CD8-positive, alpha-beta T cell (primary cell): ENCODE measurements at regions of chr11 and their contacts with region 1.

Region 1: DNA sequence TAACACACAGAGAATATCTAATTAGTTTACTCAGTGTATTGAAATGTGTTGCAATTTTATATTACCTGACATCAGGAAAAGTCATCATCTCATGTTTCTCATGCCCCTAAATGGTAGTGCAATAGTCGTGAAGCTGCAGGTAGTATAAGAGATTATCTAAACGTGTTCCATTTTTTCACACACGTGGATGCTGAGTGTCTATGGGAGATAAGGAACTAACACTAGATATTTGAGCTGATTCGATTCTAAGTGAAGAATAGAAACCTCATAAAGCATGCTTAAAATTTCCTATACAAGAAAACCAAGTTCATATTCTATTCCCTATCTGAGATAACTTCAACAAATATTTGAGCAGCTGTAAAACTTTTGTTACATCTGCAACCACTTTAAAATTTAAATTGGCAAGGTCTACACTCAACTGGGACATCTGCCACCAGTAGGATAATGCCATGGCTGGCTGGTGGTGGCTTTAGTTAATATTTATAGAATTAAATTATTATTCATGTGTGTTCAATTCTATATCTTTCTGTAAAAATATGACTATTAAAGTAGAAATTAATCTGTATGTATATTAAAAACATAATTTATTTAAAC is 388.8 kb downstream of the LUZP2 start:
- DNase-seq: no peak
- ATAC-seq: no peak
- H3K4me3 ChIP-seq: no peak overlapping the region
- H3K4me3 Mint-ChIP-seq: no peak overlapping the region
- H3K27ac ChIP-seq: no peak overlapping the region
- H3K27ac Mint-ChIP-seq: no peak overlapping the region
- H3K4me1 ChIP-seq: no peaks in the 10 kb centered on the region
- H3K4me1 Mint-ChIP-seq: no peaks in the 10 kb centered on the region
- H3K27me3 ChIP-seq: no peaks in the 10 kb centered on the region
- H3K27me3 Mint-ChIP-seq: no peaks in the 10 kb centered on the region
- CTCF ChIP-seq: no peak

Region 2: GRCh38 chr11:24819006-24819405 is 66.7 kb before region 1 on chr11:
- CTCF ChIA-PET with region 1: no interaction called
- POLR2A ChIA-PET with region 1: no interaction called
- intact Hi-C with region 1: loop called in 1 of 2 experiments (anchors 2 kb)
- DNase-seq: no peak
- ATAC-seq: no peak
- H3K4me3 ChIP-seq: no peak overlapping the region
- H3K4me3 Mint-ChIP-seq: no peak overlapping the region
- H3K27ac ChIP-seq: no peak overlapping the region
- H3K27ac Mint-ChIP-seq: no peak overlapping the region
- H3K4me1 ChIP-seq: no peaks in the 10 kb centered on the region
- H3K4me1 Mint-ChIP-seq: no peaks in the 10 kb centered on the region
- H3K27me3 ChIP-seq: no peaks in the 10 kb centered on the region
- H3K27me3 Mint-ChIP-seq: no peaks in the 10 kb centered on the region
- CTCF ChIP-seq: no peak